ENCODE measurements at regions of chr15 and their contacts with region 1.

Region 1: GRCh38 chr15:68672781-68673205 is 94.0 kb downstream of the CORO2B start:
- DNase-seq: no peak
- H3K4me3 ChIP-seq: no peak overlapping the region
- H3K27ac ChIP-seq: no peak overlapping the region
- H3K4me1 ChIP-seq: no peaks in the 10 kb centered on the region
- H3K27me3 ChIP-seq: no peaks in the 10 kb centered on the region
- CTCF ChIP-seq: no peak
- POLR2A ChIP-seq: no peak

Region 2: DNA sequence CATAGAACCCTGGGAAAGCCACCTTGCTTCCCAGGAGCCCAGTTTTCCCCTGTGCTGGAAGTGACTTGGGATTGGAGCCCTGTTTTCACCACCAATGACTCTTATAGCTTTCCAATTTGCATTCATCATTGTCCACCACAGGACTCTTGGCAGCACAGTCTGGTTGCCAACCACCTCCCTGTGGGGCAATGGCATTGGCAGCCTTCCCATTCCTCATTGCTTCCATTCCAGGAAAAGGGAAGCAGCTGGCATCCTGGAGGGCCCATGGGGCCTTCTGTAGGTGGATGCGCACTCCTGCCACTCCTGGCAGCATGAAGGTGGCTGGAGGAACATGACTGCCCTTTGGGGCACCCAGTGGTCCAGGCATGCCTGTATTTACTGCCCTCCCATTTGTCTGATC is 337.5 kb before region 1 on chr15:
- intact Hi-C with region 1: no loop called
- DNase-seq: peak in 1 of 2 donors; percentile 22
- H3K4me3 ChIP-seq: no peak overlapping the region
- H3K27ac ChIP-seq: peak overlapping the region in 1 of 3 donors; percentile 28
- H3K4me1 ChIP-seq: peaks cover 0 to 21% of the 10 kb centered on the region in 2 donors
- H3K27me3 ChIP-seq: no peaks in the 10 kb centered on the region
- CTCF ChIP-seq: no peak
- POLR2A ChIP-seq: no peak

Region 3: DNA sequence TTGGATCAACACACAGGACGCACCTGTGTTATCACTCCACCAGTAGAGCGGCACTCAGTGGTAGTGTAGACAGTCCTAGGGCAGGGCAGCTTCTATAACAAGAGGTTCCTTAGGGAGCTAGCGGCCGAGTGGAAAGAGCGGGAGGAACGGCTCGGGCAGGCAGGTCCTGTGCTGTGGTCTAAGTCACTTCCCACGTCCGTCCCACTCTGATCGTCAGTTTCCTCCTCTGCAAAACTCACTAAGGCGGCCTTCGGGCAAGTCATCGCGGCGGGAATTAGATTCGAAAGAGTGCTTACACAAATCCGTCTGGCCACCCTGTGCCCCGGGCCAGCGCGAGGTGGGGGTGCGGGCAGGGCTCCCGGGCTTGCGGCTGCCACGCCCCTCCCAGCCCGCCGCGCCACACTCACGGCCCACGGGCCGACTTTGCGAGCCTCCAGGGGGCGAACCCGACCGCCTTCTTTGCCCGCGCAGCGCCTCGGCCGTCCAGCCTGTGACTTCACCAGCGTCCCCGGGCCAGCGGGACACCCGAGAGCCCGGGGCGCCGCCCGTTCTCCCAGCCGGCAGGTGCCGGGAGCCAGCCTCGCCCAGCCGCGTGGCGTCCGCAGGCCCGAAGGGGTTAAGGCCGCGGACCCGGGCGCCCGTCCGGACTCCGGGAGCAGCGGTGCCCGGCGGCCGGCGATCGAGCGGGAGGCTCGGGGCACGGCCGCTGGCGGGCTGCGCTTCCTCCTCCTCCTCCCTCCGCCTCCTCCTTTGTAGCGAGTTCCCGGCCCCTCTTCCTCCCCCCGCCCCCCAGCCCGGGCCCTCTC is 94.4 kb before region 1 on chr15:
- intact Hi-C with region 1: loop called (anchors 5 kb)
- DNase-seq: peak; percentile 79 to 84
- H3K4me3 ChIP-seq: peak overlapping the region; percentile 4 to 58 (median 27)
- H3K27ac ChIP-seq: peak overlapping the region; percentile 58 to 83 (median 61)
- H3K4me1 ChIP-seq: peaks cover 12 to 21% of the 10 kb centered on the region in 2 donors
- H3K27me3 ChIP-seq: no peaks in the 10 kb centered on the region
- CTCF ChIP-seq: peak in 4 of 6 experiments; percentile 15 to 58 (median 41)
- POLR2A ChIP-seq: peak in 1 of 2 donors; percentile 14

Region 4: DNA sequence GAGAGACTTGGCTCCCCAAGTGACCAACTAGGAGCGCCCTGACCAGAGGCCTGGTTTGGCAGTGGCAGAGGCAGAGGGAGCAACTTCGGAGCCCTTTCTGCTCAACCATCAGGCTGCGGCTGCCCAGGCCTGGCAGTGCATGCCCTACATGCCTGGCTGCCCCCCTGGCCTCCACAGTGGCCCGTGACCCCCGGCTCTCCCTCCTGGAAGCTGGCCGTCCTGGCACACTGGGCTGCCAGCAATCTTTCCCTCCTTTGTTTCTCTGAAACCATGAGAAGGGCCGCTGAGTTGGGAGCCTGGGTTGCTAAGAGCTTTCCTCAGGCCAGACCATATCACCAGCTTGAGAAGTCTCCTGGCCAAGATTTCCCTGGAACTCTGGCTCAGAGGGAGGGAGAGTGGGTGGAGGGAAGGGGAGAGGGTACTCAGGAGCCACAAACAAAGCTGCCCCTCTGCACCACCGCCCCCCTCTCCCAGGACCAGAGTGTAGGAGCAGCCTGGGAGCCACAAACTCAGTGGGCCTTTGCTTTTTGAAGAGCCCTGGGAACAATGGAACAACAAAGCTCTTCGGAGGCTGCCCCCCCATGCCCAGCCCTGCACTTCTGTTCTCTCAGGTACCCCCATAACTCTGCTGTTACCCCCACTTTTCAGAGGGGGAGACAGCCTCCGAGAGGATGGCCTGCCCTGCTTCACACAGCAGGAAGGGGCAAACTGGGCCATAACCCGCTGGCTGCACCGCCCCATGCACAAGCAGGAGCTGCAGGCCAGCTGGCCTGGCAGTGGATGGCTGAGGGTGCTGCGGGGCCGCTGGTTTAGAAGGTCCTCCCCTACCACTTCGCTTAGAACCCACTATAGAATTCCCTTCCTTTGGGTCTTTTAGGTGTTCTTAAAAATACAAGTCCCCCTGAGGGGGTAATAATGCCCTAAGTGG is 82.7 kb before region 1 on chr15:
- intact Hi-C with region 1: no loop called
- DNase-seq: peak; percentile 85 to 87
- H3K4me3 ChIP-seq: no peak overlapping the region
- H3K27ac ChIP-seq: peak overlapping the region; percentile 48 to 88 (median 52)
- H3K4me1 ChIP-seq: peaks cover 32 to 48% of the 10 kb centered on the region in 2 donors
- H3K27me3 ChIP-seq: no peaks in the 10 kb centered on the region
- CTCF ChIP-seq: no peak
- POLR2A ChIP-seq: no peak